ENCODE measurements at regions of chr14 and their contacts with region 1.

Region 1: DNA sequence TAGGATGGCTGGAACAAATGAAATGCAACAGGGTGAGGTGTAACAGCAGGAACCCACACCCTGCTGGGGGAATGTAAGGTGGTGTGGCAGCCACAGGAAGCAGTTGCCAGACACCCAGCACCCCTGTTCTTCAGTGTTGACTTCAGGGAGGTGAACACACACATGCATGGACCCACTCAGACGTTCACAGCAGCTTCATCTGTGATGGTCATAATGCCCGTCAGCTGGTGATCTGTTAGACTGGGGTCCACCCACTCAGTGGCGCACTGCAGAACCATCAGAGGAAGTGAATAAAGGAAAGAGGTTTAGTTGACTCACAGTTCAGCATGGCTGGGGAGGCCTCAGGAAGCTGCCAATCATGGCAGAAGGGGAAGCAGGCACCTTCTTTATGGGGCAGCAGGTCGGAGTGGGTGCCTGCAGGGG is 22.7 kb upstream of the TEX22 start:
- DNase-seq: no peak
- H3K4me3 Mint-ChIP-seq: no peak overlapping the region
- H3K27ac Mint-ChIP-seq: peak overlapping the region; percentile 77
- H3K4me1 Mint-ChIP-seq: peaks cover 10% of the 10 kb centered on the region
- H3K27me3 Mint-ChIP-seq: no peaks in the 10 kb centered on the region

Region 2: GRCh38 chr14:105448706-105449111 is 73.1 kb after region 1 on chr14:
- intact Hi-C with region 1: loop called (anchors 10 kb)
- DNase-seq: peak; percentile 41
- H3K4me3 Mint-ChIP-seq: no peak overlapping the region
- H3K27ac Mint-ChIP-seq: no peak overlapping the region
- H3K4me1 Mint-ChIP-seq: no peaks in the 10 kb centered on the region
- H3K27me3 Mint-ChIP-seq: no peaks in the 10 kb centered on the region